ENCODE measurements at regions of chr9 and their contacts with region 1.

Region 1: GRCh38 chr9:127943731-127944144 is 6.1 kb upstream of the DPM2 start:
- DNase-seq: peak; percentile 77 to 96
- H3K4me3 ChIP-seq: no peak overlapping the region
- CTCF ChIP-seq: peak in 1 of 3 donors; percentile 85
- POLR2A ChIP-seq: no peak

Region 2: GRCh38 chr9:128034821-128035764 is 91.4 kb after region 1 on chr9:
- intact Hi-C with region 1: loop called (anchors 5 kb)
- DNase-seq: peak; percentile 77 to 92
- H3K4me3 ChIP-seq: no peak overlapping the region
- CTCF ChIP-seq: peak in 1 of 3 donors; percentile 39
- POLR2A ChIP-seq: no peak

Region 3: DNA sequence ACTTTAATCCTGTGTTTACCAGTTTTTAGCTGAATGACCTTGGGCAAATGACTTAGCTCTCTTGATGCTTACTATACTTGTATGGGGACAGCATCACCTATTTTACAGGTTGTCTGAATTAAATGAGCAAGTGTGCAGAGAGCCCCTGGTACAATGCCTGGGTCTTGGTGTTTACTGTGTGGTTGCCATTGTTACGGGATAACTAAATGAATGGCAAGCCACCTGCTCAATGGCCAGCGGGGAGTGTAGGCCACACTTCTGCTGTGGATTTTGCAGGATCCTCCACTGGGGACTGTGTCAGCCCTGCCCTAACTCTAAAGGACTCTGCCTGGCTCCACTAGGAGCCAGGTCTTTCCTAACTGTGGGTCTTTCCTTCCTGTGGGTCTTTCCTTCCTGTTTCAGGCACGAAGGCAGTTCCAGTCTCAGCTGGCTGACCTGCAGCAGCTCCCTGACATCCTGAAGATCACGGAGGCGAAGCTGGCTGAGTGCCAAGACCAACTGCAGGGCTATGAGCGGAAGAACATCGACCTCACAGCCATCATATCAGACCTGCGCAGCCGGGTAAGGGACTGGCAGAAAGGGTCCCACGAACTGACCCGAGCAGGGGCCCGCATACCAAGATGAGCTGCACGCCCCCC is 550.5 kb after region 1 on chr9:
- intact Hi-C with region 1: no loop called
- DNase-seq: peak; percentile 39 to 88
- H3K4me3 ChIP-seq: no peak overlapping the region
- CTCF ChIP-seq: no peak
- POLR2A ChIP-seq: no peak

Region 4: GRCh38 chr9:129796029-129796910 is 1852.5 kb after region 1 on chr9:
- intact Hi-C with region 1: no loop called
- DNase-seq: no peak
- H3K4me3 ChIP-seq: no peak overlapping the region
- CTCF ChIP-seq: no peak
- POLR2A ChIP-seq: no peak

Measured in lower leg skin (tissue), 4 donors.